Stomach (tissue), 19 donors: ENCODE measurements at regions of chr15 and their contacts with region 1.

Region 1: GRCh38 chr15:55649054-55649423 is 60.9 kb upstream of the PYGO1 start:
- DNase-seq: no peak
- H3K4me3 ChIP-seq: no peak overlapping the region
- H3K27ac ChIP-seq: no peak overlapping the region
- H3K4me1 ChIP-seq: no peaks in the 10 kb centered on the region
- H3K27me3 ChIP-seq: no peaks in the 10 kb centered on the region
- CTCF ChIP-seq: no peak
- EP300 ChIP-seq: no peak
- POLR2A ChIP-seq: no peak

Region 2: GRCh38 chr15:55526559-55527036 is 122.4 kb before region 1 on chr15:
- intact Hi-C with region 1: loop called (anchors 10 kb)
- DNase-seq: peak in 1 of 2 donors; percentile 44
- H3K4me3 ChIP-seq: no peak overlapping the region
- H3K27ac ChIP-seq: no peak overlapping the region
- H3K4me1 ChIP-seq: no peaks in the 10 kb centered on the region
- H3K27me3 ChIP-seq: peaks cover 0 to 6% (median 0%) of the 10 kb centered on the region in 3 donors
- CTCF ChIP-seq: peak in 4 of 7 experiments; percentile 14 to 37 (median 33)
- EP300 ChIP-seq: no peak
- POLR2A ChIP-seq: no peak

Region 3: GRCh38 chr15:55846116-55846707 is 197.2 kb after region 1 on chr15:
- intact Hi-C with region 1: loop called (anchors 10 kb)
- DNase-seq: peak in 1 of 2 donors; percentile 87
- H3K4me3 ChIP-seq: no peak overlapping the region
- H3K27ac ChIP-seq: no peak overlapping the region
- H3K4me1 ChIP-seq: no peaks in the 10 kb centered on the region
- H3K27me3 ChIP-seq: no peaks in the 10 kb centered on the region
- CTCF ChIP-seq: peak in 5 of 7 experiments; percentile 76 to 89 (median 81)
- EP300 ChIP-seq: no peak
- POLR2A ChIP-seq: no peak